Adrenal gland (tissue), 19 donors: ENCODE measurements at regions of chr1 and their contacts with region 1.

Region 1: GRCh38 chr1:121471523-121471922 is 286.7 kb downstream of the SRGAP2C start:
- DNase-seq: no peak
- H3K4me3 ChIP-seq: no peak overlapping the region
- H3K27ac ChIP-seq: no peak overlapping the region
- H3K4me1 ChIP-seq: no peaks in the 10 kb centered on the region
- H3K27me3 ChIP-seq: no peaks in the 10 kb centered on the region
- CTCF ChIP-seq: no peak
- POLR2A ChIP-seq: no peak

Region 2: GRCh38 chr1:121418369-121419049 is 53.0 kb before region 1 on chr1:
- intact Hi-C with region 1: no loop called
- DNase-seq: no peak
- H3K4me3 ChIP-seq: no peak overlapping the region
- H3K27ac ChIP-seq: no peak overlapping the region
- H3K4me1 ChIP-seq: no peaks in the 10 kb centered on the region
- H3K27me3 ChIP-seq: no peaks in the 10 kb centered on the region
- CTCF ChIP-seq: no peak
- POLR2A ChIP-seq: no peak

Region 3: DNA sequence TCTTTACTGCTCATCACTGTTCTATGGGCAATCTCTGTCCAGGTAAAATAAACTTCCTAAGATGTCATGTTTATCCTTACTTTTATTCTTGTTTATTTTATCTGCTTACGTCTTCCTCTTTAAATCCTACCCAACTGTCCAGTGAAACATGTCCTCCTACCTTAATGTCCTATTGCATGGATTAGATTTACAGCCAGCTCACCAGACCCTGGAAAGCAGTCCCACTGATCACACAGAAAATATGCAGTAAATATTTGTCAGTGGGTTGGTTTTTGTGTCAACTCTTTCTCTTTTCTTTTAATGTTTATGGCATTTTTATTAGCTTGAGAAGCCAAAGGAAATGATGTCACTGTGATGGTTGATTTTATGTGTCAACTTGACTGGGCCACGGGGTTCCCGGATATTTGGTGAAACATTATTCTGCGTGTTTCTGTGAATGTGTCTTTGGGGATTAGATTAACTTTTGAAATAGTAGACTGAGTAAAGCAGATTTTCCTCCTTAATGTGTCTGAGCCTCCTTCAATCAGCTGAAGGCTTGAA is 28.5 kb before region 1 on chr1:
- intact Hi-C with region 1: no loop called
- DNase-seq: no peak
- H3K4me3 ChIP-seq: no peak overlapping the region
- H3K27ac ChIP-seq: no peak overlapping the region
- H3K4me1 ChIP-seq: no peaks in the 10 kb centered on the region
- H3K27me3 ChIP-seq: no peaks in the 10 kb centered on the region
- CTCF ChIP-seq: no peak
- POLR2A ChIP-seq: no peak

Region 4: DNA sequence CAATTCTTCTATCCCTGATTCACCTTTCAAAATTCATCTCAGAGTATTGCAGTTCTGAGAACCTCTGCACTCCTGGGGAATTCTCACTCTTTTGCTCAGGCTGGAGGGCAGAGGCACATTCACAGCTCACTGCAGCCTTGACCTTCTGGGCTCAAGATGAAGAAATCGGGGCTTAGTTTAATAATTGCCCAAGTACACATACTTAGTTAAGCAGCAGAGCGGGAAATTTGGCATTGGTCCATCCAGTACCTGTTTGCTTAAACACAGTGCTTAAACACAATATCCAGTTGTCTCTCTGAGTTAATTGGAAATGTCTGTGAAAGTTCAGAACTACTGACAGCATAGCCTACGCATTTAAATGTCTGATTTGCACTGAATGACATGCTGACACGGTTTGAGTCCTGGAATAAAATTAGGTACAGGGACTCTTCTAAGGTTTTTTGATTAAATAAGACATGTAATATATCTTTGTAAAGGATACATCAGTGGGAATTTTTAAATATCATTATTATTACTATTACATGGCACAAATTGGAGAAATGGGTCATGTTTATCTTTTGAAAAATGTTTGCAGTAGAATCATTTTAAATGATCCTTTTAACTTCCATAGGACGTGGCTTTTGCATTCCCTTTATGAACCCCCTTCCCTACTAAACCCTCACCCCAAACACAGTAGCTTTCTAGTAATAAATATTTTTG is 50.7 kb after region 1 on chr1:
- intact Hi-C with region 1: loop called in 1 of 2 experiments (anchors 10 kb)
- DNase-seq: no peak
- H3K4me3 ChIP-seq: no peak overlapping the region
- H3K27ac ChIP-seq: no peak overlapping the region
- H3K4me1 ChIP-seq: peaks cover 0 to 7% of the 10 kb centered on the region in 2 donors
- H3K27me3 ChIP-seq: peaks cover 20% of the 10 kb centered on the region
- CTCF ChIP-seq: no peak
- POLR2A ChIP-seq: no peak

Region 5: GRCh38 chr1:121558514-121558913 is 87.0 kb after region 1 on chr1:
- intact Hi-C with region 1: no loop called
- DNase-seq: peak; percentile 21 to 60 (median 41)
- H3K4me3 ChIP-seq: no peak overlapping the region
- H3K27ac ChIP-seq: no peak overlapping the region
- H3K4me1 ChIP-seq: no peaks in the 10 kb centered on the region
- H3K27me3 ChIP-seq: no peaks in the 10 kb centered on the region
- CTCF ChIP-seq: no peak
- POLR2A ChIP-seq: no peak